Activated naive CD8-positive, alpha-beta T cell treated with anti-CD3 and anti-CD28 coated beads, Interleukin-2, amount 10 ng/mL, durations not matched to agents 7 days and 5 days (primary cell): ENCODE measurements at regions of chr12 and their contacts with region 1.

Region 1: DNA sequence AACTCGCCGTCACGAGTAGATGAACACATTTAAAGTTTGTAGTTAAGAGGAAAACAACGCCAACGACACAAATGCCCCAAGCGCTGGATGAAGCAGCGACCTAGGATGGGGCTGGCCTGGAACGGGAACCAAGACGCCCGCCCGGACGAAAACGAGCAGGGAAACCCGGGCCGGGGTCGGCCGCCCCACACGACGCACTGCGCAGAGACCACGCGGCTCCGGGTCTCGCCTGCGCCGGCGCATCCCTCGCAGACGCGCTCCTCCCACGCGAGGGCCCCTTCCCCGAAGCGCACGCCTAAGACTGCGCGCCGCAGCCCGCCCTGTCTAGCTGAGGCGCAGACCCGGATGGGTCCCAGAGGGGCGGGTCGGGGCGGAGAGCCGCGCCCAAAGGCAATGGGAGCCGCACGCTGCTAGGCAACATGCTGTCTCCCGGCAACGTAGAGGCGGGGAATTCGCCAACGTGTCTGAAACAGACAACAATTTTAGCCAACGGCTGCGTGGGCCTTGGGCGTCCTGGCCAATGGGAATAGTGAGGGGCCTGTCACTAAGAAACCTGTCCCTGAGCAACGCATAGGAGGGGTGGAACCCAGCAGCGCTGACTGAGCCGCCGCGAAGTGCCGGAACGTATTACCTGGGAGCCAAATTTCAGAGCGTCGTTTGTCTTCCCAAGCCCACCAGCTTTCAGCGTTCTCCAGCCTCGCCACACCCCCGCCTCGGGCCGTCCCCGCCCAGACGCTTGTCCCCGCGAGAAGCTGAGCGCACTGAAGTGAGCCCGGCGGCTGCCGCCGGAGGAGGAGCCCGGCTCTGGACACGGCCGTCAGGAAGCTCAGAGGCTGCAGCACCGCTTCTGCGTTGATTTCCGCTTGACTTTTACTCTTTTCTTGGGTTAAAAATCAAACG is 21.0 kb upstream of the CHFR start:
- DNase-seq: peak; percentile 94
- ATAC-seq: peak; percentile 95
- H3K4me3 Mint-ChIP-seq: peak overlapping the region; percentile 91
- H3K27ac Mint-ChIP-seq: peak overlapping the region; percentile 96
- H3K4me1 Mint-ChIP-seq: peaks cover 9% of the 10 kb centered on the region
- H3K27me3 Mint-ChIP-seq: peaks cover 13% of the 10 kb centered on the region

Region 2: DNA sequence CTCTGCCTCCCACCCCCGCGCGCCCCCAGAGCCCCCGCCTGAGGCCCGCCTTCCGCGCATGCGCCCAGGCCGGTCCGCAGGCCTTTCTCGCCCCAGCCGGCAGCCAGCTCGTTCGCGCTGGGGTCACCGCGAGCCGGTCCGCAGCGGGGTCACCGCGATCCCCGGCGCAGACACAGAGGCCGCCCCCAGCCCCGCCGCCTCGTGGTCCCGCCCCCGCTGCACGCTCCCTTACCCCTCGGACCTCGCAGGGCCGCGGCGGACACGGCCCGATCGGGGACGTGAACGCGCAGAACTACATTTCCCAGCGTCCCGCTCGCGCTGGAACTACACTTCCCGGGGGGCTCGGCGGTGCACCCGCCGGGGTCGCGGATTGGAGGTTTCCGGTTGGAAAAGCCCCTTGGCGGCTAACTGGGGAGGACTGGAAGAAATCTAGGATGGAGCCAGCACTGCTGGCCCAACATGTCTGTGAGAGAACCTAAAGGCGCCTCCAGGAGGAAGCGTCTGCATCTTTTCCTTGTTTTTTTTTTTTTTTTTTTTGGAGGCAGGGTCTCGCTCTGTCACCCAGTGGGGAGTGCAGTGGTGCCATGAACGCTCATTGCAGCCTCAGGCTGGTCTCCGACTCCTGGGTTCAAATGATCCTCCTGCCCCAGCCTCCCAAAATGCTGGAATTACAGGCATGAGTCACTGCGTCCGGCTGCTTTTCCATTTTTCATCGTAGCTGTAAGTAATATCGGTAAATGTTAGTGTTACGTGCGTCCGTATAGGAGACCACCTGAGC is 47.8 kb after region 1 on chr12 and contains the start of gene ZNF605:
- POLR2A ChIA-PET with region 1: interaction called, 11 read pairs
- DNase-seq: peak; percentile 89
- ATAC-seq: peak; percentile 88
- H3K4me3 Mint-ChIP-seq: peak within 1 kb of the TSS; percentile 90
- H3K27ac Mint-ChIP-seq: peak within 1 kb of the TSS; percentile 98
- H3K4me1 Mint-ChIP-seq: peaks cover 16% of the 10 kb centered on the region
- H3K27me3 Mint-ChIP-seq: no peaks in the 10 kb centered on the region
- total RNA-seq, gene ZNF605: 12.3 to 13.6 TPM